CD4-positive, alpha-beta memory T cell (primary cell): ENCODE measurements at regions of chr3 and their contacts with region 1.

Region 1: GRCh38 chr3:67790043-67790442 is 135.6 kb upstream of the SUCLG2 start:
- DNase-seq: peak; percentile 55 to 68 (median 58)
- H3K4me3 ChIP-seq: no peak overlapping the region
- H3K4me3 Mint-ChIP-seq: no peak overlapping the region
- H3K27ac ChIP-seq: no peak overlapping the region
- H3K27ac Mint-ChIP-seq: no peak overlapping the region
- H3K4me1 ChIP-seq: no peaks in the 10 kb centered on the region
- H3K4me1 Mint-ChIP-seq: peaks cover 4 to 10% (median 5%) of the 10 kb centered on the region in 4 donors
- H3K27me3 ChIP-seq: no peaks in the 10 kb centered on the region
- H3K27me3 Mint-ChIP-seq: no peaks in the 10 kb centered on the region

Region 2: GRCh38 chr3:67384760-67385397 is 405.2 kb before region 1 on chr3:
- CTCF ChIA-PET with region 1: interaction called, 109 read pairs
- POLR2A ChIA-PET with region 1: no interaction called
- intact Hi-C with region 1: loop called (anchors 1 kb)
- DNase-seq: peak in 4 of 5 donors; percentile 24 to 38 (median 30)
- H3K4me3 ChIP-seq: no peak overlapping the region
- H3K4me3 Mint-ChIP-seq: no peak overlapping the region
- H3K27ac ChIP-seq: no peak overlapping the region
- H3K27ac Mint-ChIP-seq: peak overlapping the region in 1 of 7 donors; percentile 52
- H3K4me1 ChIP-seq: no peaks in the 10 kb centered on the region
- H3K4me1 Mint-ChIP-seq: peaks cover 0 to 10% (median 5%) of the 10 kb centered on the region in 4 donors
- H3K27me3 ChIP-seq: no peaks in the 10 kb centered on the region
- H3K27me3 Mint-ChIP-seq: no peaks in the 10 kb centered on the region

Region 3: DNA sequence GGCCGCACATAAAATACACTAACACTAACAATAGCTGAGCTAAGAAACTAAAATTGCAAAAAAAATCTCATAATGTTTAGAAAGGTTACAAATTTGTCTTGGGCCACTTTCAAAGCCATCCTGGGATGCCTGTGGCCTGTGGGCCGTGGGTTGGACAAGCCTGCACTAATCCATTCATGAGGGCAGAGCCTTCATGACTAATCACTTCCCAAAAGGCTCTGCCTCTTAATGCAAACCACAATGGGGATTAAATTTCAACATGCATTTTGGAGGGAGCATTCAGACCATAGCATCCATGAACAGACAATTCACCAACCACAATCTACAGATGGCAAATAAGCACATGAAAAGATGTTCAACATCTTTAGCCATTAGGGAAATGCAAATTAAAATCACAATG is 263.8 kb before region 1 on chr3:
- CTCF ChIA-PET with region 1: interaction called, 3 read pairs
- POLR2A ChIA-PET with region 1: no interaction called
- intact Hi-C with region 1: loop called (anchors 5 kb)
- DNase-seq: no peak
- H3K4me3 ChIP-seq: no peak overlapping the region
- H3K4me3 Mint-ChIP-seq: no peak overlapping the region
- H3K27ac ChIP-seq: no peak overlapping the region
- H3K27ac Mint-ChIP-seq: no peak overlapping the region
- H3K4me1 ChIP-seq: no peaks in the 10 kb centered on the region
- H3K4me1 Mint-ChIP-seq: peaks cover 1 to 22% (median 10%) of the 10 kb centered on the region in 4 donors
- H3K27me3 ChIP-seq: no peaks in the 10 kb centered on the region
- H3K27me3 Mint-ChIP-seq: no peaks in the 10 kb centered on the region

Region 4: DNA sequence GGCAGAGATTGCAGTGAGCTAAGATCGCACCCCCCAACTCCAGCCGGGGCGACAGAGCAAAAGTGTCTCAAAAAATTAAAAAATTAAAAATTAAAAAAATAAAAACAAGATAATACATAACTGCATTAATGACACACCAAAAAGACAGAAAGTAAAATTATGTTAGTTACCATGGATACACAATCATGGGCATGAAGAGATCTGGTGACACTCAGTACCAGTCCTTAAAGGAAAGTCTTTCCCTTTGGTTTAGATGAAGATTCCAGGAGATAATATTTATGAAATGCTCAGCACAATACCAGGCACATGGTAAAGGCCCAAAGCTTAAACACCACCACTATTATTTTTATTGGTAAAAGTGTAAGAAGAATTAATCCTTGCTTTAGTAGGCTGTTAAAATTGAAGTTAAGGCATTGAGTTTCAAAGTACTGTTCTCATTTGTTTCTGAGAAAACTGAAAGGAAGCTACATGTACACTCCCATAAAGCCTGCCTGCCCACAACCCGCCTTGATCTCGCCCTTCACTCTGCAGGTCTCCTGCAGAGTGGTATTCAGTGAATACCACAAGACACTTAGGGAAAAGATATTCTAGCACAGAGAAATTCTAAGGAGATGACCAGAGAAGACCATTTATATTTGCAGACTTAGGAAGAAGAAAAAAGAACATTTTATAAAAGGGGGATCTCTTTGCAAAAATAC is 188.0 kb before region 1 on chr3:
- CTCF ChIA-PET with region 1: interaction called, 6 read pairs
- POLR2A ChIA-PET with region 1: no interaction called
- intact Hi-C with region 1: loop called (anchors 5 kb)
- DNase-seq: peak in 2 of 5 donors; percentile 11 to 18
- H3K4me3 ChIP-seq: no peak overlapping the region
- H3K4me3 Mint-ChIP-seq: peak overlapping the region in 7 of 8 donors; percentile 59 to 87 (median 80)
- H3K27ac ChIP-seq: no peak overlapping the region
- H3K27ac Mint-ChIP-seq: peak overlapping the region; percentile 19 to 87 (median 77)
- H3K4me1 ChIP-seq: peaks cover 63% of the 10 kb centered on the region
- H3K4me1 Mint-ChIP-seq: peaks cover 54 to 84% (median 70%) of the 10 kb centered on the region in 4 donors
- H3K27me3 ChIP-seq: no peaks in the 10 kb centered on the region
- H3K27me3 Mint-ChIP-seq: no peaks in the 10 kb centered on the region

Region 5: GRCh38 chr3:68306571-68306970 is 516.5 kb after region 1 on chr3:
- CTCF ChIA-PET with region 1: no interaction called
- POLR2A ChIA-PET with region 1: no interaction called
- intact Hi-C with region 1: no loop called
- DNase-seq: peak in 4 of 5 donors; percentile 6 to 24 (median 15)
- H3K4me3 ChIP-seq: no peak overlapping the region
- H3K4me3 Mint-ChIP-seq: no peak overlapping the region
- H3K27ac ChIP-seq: no peak overlapping the region
- H3K27ac Mint-ChIP-seq: no peak overlapping the region
- H3K4me1 ChIP-seq: no peaks in the 10 kb centered on the region
- H3K4me1 Mint-ChIP-seq: no peaks in the 10 kb centered on the region
- H3K27me3 ChIP-seq: no peaks in the 10 kb centered on the region
- H3K27me3 Mint-ChIP-seq: no peaks in the 10 kb centered on the region